HepG2 (cell line): ENCODE measurements at regions of chr3 and their contacts with region 1.

Region 1: GRCh38 chr3:160565442-160566403 is at the start of gene KPNA4:
- DNase-seq: peak; percentile 92
- ATAC-seq: peak; percentile 95
- H3K4me3 ChIP-seq: peak within 1 kb of the TSS; percentile 86 to 95 (median 86)
- H3K27ac ChIP-seq: peak within 1 kb of the TSS; percentile 92
- H3K4me1 ChIP-seq: peaks cover 41% of the 10 kb centered on the region
- H3K27me3 ChIP-seq: no peaks in the 10 kb centered on the region; a peak in 1 of 5 replicates
- CTCF ChIP-seq: no peak
- EP300 ChIP-seq: no peak
- POLR2A ChIP-seq: peak; percentile 78 to 84
- RAD21 ChIP-seq: no peak
- total RNA-seq, gene KPNA4: 27.9 and 32.6 TPM in 2 replicates

Region 2: DNA sequence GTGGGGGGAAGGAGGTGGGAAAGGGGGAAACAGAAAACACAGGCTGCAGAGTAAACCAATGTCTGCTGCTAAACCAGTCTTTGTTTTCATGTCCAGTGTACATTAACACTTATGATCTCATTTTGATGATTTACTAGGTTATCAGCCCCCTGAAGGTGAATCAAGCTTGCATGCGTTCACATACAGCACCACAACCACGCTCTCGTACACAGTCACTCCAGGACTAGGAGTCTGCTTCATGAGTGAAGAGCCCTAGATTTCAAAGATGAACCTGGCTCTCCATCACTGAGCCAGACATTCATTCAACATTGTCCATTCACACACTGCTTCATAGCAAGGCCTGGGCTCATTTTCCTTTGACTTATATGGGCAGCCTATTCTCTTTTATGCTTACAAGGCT is 64.4 kb before region 1 on chr3:
- CTCF ChIA-PET with region 1: no interaction called
- POLR2A ChIA-PET with region 1: no interaction called
- in situ Hi-C with region 1: no loop called
- intact Hi-C with region 1: loop called (anchors 5 kb)
- DNase-seq: no peak
- ATAC-seq: no peak
- H3K4me3 ChIP-seq: no peak overlapping the region
- H3K27ac ChIP-seq: no peak overlapping the region
- H3K4me1 ChIP-seq: no peaks in the 10 kb centered on the region
- H3K27me3 ChIP-seq: no peaks in the 10 kb centered on the region
- CTCF ChIP-seq: no peak
- EP300 ChIP-seq: no peak
- POLR2A ChIP-seq: no peak
- RAD21 ChIP-seq: no peak

Region 3: DNA sequence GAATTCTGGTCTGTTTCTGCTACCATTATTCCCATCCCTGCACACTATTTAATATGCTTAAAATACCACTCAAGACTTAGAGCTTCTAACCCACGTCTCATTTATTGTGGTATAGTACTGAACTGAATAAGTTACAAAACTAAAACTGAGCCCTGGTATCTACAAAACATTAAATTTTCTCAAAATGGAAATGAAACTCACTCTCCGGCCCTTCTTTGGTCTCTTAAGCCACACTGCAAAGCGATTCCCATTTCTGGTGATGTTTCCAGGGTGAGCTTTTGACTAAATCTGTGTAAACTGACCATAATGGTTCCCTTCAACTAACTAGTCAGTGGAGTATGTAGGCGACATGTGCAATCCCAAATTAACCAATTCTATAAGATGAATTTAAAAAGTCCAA is 19.0 kb before region 1 on chr3:
- CTCF ChIA-PET with region 1: no interaction called
- POLR2A ChIA-PET with region 1: no interaction called
- in situ Hi-C with region 1: no loop called
- intact Hi-C with region 1: no loop called
- DNase-seq: no peak
- ATAC-seq: no peak
- H3K4me3 ChIP-seq: no peak overlapping the region
- H3K27ac ChIP-seq: no peak overlapping the region
- H3K4me1 ChIP-seq: no peaks in the 10 kb centered on the region
- H3K27me3 ChIP-seq: no peaks in the 10 kb centered on the region
- CTCF ChIP-seq: no peak
- EP300 ChIP-seq: no peak
- POLR2A ChIP-seq: no peak
- RAD21 ChIP-seq: no peak

Region 4: DNA sequence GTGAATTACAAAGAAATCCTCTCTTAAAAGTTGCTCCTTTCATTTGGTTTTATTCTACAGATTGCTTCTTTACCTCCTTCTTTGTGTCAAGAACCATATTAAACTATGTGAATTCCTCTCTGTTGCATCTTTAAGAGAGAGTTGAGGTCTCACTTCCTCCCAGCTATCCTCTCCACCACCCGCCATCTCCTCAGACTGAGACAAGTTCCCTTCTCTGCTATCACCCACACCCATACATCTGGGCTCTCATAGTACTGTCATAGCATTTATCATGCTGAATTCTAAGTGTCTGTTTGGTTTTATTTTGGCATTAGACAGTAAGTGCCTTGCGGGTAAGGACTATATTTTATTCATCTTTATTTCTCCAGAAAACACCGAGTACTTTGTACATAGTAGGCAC is 485.2 kb after region 1 on chr3:
- CTCF ChIA-PET with region 1: no interaction called
- POLR2A ChIA-PET with region 1: no interaction called
- in situ Hi-C with region 1: no loop called
- intact Hi-C with region 1: no loop called
- DNase-seq: no peak
- ATAC-seq: no peak
- H3K4me3 ChIP-seq: no peak overlapping the region
- H3K27ac ChIP-seq: no peak overlapping the region
- H3K4me1 ChIP-seq: no peaks in the 10 kb centered on the region
- H3K27me3 ChIP-seq: peaks cover 0 to 2% of the 10 kb centered on the region in 2 experiments; a peak in 1 of 5 replicates
- CTCF ChIP-seq: no peak
- EP300 ChIP-seq: no peak
- POLR2A ChIP-seq: no peak
- RAD21 ChIP-seq: no peak